OCI-LY7 (cell line): ENCODE measurements at regions of chr4 and their contacts with region 1.

Region 1: GRCh38 chr4:121900132-121900983 is 30.1 kb upstream of the BBS7 start:
- DNase-seq: peak; percentile 65
- H3K4me3 ChIP-seq: no peak overlapping the region
- H3K27ac ChIP-seq: no peak overlapping the region
- H3K4me1 ChIP-seq: no peaks in the 10 kb centered on the region
- CTCF ChIP-seq: peak; percentile 92

Region 2: GRCh38 chr4:122003335-122003734 is 103.0 kb after region 1 on chr4:
- CTCF ChIA-PET with region 1: interaction called, 4 read pairs
- POLR2A ChIA-PET with region 1: no interaction called
- intact Hi-C with region 1: loop called (anchors 1 kb)
- DNase-seq: peak; percentile 59
- H3K4me3 ChIP-seq: no peak overlapping the region
- H3K27ac ChIP-seq: no peak overlapping the region
- H3K4me1 ChIP-seq: no peaks in the 10 kb centered on the region
- CTCF ChIP-seq: peak; percentile 77

Region 3: DNA sequence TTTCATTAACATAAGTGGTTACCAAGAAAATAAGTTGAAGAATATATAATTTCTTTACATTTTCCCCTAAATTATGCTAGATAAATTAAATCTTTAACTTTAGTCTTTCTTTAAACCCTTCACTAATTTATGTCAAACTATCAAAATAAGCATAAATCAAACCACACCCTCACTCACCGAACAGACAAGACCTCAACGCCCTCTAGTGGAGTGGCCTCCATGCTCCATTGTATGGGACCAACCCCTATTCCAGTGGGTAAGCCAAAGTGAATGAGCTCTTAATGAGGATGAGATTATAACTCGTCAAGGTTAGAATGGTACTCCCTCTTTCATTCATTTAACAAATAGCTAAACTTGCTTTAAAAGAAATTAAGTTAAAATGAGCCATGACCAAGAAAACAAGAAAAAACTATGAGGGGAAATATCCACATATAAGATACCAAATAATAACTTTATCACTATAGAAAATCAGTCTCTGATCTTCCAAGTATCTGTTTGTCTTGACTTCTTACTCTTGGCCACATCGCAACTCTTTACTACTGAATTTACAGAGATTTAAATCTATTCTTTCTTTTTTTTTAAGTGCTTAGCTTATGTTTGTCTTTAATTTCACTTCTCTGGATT is 816.6 kb after region 1 on chr4:
- CTCF ChIA-PET with region 1: no interaction called
- POLR2A ChIA-PET with region 1: no interaction called
- intact Hi-C with region 1: loop called (anchors 10 kb)
- DNase-seq: peak; percentile 62
- H3K4me3 ChIP-seq: no peak overlapping the region
- H3K27ac ChIP-seq: no peak overlapping the region
- H3K4me1 ChIP-seq: no peaks in the 10 kb centered on the region
- CTCF ChIP-seq: peak; percentile 94